CD8-positive, alpha-beta T cell (primary cell): ENCODE measurements at regions of chr13 and their contacts with region 1.

Region 1: GRCh38 chr13:78679329-78679728 is 20.4 kb upstream of the OBI1 start:
- DNase-seq: no peak
- ATAC-seq: no peak
- H3K4me3 ChIP-seq: no peak overlapping the region
- H3K4me3 Mint-ChIP-seq: no peak overlapping the region
- H3K27ac ChIP-seq: no peak overlapping the region
- H3K27ac Mint-ChIP-seq: no peak overlapping the region
- H3K4me1 ChIP-seq: no peaks in the 10 kb centered on the region
- H3K4me1 Mint-ChIP-seq: no peaks in the 10 kb centered on the region
- H3K27me3 ChIP-seq: no peaks in the 10 kb centered on the region
- H3K27me3 Mint-ChIP-seq: peaks cover 22% of the 10 kb centered on the region
- CTCF ChIP-seq: no peak

Region 2: DNA sequence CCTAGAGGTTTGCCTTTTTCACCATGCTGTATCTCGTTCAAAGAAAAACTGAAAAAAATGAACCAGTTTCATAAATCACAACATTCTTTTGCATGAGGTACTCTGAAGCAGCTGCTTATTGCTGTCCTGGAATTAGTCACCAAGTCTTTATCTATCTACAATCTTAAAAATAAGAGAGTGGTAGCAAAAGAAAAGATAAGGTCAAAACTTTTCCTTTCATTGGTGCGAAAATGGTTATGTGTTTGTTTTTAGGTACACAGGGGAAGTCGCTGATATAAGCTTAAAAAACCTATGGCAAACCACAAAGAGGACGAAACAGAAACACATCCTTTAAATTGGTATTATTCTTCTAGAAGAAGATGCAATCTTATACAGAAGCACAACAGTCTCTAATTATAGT is 41.1 kb before region 1 on chr13:
- CTCF ChIA-PET with region 1: no interaction called
- POLR2A ChIA-PET with region 1: no interaction called
- intact Hi-C with region 1: loop called in 1 of 2 experiments (anchors 5 kb)
- DNase-seq: no peak
- ATAC-seq: no peak
- H3K4me3 ChIP-seq: no peak overlapping the region
- H3K4me3 Mint-ChIP-seq: no peak overlapping the region
- H3K27ac ChIP-seq: no peak overlapping the region
- H3K27ac Mint-ChIP-seq: no peak overlapping the region
- H3K4me1 ChIP-seq: no peaks in the 10 kb centered on the region
- H3K4me1 Mint-ChIP-seq: peaks cover 6% of the 10 kb centered on the region
- H3K27me3 ChIP-seq: no peaks in the 10 kb centered on the region
- H3K27me3 Mint-ChIP-seq: no peaks in the 10 kb centered on the region
- CTCF ChIP-seq: no peak

Region 3: DNA sequence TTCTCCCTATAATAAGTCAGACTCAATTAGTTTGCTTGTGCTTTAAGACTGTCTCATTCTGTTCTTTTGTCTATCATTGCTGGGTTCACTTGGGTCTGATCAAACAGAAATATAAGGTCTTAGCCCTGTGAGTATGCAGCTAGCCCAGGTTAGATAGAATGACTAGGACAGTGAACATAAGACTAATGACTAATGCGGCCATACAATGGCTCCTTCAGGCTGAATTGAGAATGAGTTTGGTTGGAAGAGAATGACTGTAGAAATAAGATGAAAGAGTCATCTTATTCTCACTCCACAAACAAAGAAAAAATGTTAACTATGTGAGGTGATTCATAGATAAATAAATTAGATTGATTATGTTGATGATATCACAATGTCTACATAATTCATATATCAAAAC is 29.7 kb after region 1 on chr13:
- CTCF ChIA-PET with region 1: no interaction called
- POLR2A ChIA-PET with region 1: no interaction called
- intact Hi-C with region 1: no loop called
- DNase-seq: no peak
- ATAC-seq: no peak
- H3K4me3 ChIP-seq: no peak overlapping the region
- H3K4me3 Mint-ChIP-seq: no peak overlapping the region
- H3K27ac ChIP-seq: no peak overlapping the region
- H3K27ac Mint-ChIP-seq: no peak overlapping the region
- H3K4me1 ChIP-seq: no peaks in the 10 kb centered on the region
- H3K4me1 Mint-ChIP-seq: no peaks in the 10 kb centered on the region
- H3K27me3 ChIP-seq: no peaks in the 10 kb centered on the region
- H3K27me3 Mint-ChIP-seq: peaks cover 24% of the 10 kb centered on the region
- CTCF ChIP-seq: no peak